Left cardiac atrium (tissue), 4 donors: ENCODE measurements at regions of chr12 and their contacts with region 1.

Region 1: GRCh38 chr12:109110988-109111495 is 5.3 kb upstream of the ACACB start:
- DNase-seq: peak; percentile 95
- ATAC-seq: peak; percentile 93 to 99

Region 2: GRCh38 chr12:109154451-109155438 is 43.7 kb after region 1 on chr12:
- intact Hi-C with region 1: loop called in 1 of 2 experiments (anchors 5 kb)
- DNase-seq: peak; percentile 86
- ATAC-seq: peak; percentile 96 to 99

Region 3: GRCh38 chr12:109165599-109165998 is 54.6 kb after region 1 on chr12:
- intact Hi-C with region 1: loop called in 1 of 2 experiments (anchors 10 kb)
- DNase-seq: no peak
- ATAC-seq: no peak

Region 4: DNA sequence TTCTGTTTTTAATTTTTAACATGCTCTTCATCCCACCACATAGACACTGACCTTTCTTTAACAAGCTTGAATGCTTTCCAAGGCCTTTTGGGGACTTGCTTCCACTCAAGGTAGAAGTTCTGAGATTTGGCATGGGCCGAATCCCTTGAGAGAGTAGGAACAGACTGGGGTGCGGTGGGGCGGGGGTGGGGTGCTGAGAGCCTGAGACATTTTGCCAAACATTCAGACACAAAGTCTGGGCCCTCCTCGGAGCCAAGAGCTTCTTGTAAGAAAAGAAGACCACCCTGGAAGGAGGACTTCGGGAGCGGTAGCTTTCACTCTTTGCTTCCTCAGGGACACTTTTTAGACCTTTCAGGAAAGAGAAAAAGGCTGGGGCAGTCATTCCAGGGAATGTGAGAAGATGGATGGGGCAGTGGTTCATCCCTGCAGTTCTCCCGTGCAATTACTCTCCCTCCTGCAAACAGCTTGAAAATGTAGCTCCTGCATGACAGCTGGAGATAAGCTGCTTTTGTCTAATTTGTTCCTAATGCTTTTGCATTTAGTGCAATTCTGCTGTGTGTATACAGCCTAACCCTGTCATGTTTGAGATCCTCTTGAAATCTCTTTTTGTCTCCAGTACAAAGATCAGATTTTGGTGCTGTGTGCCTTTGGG is 220.4 kb after region 1 on chr12:
- intact Hi-C with region 1: no loop called
- DNase-seq: no peak
- ATAC-seq: no peak